ENCODE measurements at regions of chr3 and their contacts with region 1.

Region 1: DNA sequence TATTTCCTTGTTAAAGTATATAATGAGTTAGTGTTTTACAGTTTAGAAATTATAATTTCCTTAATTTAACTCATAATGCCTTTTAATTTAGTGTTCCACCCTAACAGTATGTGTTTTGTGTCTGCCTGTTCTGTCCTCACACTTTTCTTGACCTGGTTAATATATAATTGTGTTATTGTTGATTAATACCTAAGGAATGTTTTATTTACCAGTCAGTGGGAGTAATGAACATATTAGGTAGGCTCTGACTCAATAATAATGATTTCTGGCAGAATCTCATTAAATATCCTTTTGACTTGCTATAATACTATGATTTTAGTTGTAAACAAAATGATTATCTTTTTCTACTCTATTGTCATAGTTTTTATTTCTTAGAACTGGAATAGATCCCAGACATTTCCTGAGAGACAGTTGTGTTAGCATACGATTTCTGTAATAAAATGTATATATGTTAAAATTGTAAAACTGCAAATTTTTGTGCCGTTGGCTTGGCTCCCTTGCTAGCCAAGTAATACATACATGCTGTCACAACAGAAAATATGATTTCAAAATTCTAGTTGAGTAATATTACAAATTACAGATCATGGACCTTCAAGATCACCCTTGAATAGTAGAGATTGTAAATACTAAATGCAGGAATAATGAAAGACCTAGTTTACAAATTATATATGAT is 51.9 kb downstream of the RASA2 start:
- DNase-seq: no peak
- ATAC-seq: no peak
- H3K4me3 ChIP-seq: no peak overlapping the region
- H3K4me3 Mint-ChIP-seq: no peak overlapping the region
- H3K27ac ChIP-seq: no peak overlapping the region
- H3K27ac Mint-ChIP-seq: peak overlapping the region; percentile 55
- H3K4me1 ChIP-seq: peaks cover 6% of the 10 kb centered on the region
- H3K4me1 Mint-ChIP-seq: peaks cover 61% of the 10 kb centered on the region
- H3K27me3 ChIP-seq: no peaks in the 10 kb centered on the region
- H3K27me3 Mint-ChIP-seq: no peaks in the 10 kb centered on the region
- CTCF ChIP-seq: no peak

Region 2: DNA sequence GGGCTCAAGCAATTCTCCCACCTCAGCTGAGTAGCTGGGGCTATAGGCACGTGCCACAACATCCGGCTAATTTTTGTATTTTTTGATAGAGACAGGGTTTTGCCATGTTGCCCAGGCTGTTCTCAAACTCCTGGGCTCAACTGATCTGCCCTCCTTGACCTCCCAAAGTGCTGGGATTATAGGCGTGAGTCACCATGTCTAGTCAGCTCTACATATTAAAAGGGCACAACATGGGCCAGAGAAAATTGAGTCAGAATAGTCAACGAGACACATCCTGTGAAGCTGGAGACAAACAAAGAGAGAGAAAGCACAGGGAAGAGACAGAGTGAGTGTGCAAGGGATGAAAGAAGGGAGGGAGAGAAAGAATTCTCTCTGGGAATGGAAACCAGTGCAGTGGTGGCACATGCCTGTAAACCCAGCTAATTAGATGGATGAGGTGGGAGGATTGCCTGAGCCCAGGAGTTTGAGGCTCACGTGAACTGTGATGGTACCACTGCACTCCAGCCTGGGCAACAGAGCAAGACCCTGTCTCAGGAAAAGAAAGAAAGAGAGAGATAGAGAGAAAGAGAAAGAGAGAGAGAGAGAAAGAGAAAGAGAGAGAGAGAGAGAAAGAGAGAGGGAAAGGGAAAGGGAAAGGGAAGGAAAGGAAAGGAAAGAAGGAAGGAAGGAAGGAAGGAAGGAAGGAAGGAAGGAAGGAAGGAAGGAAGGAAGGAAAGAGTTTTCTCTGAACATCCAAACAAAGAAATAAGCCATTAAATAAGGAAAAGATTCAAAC is 704.3 kb before region 1 on chr3:
- CTCF ChIA-PET with region 1: no interaction called
- POLR2A ChIA-PET with region 1: no interaction called
- intact Hi-C with region 1: no loop called
- DNase-seq: no peak
- ATAC-seq: no peak
- H3K4me3 ChIP-seq: no peak overlapping the region
- H3K4me3 Mint-ChIP-seq: no peak overlapping the region
- H3K27ac ChIP-seq: no peak overlapping the region
- H3K27ac Mint-ChIP-seq: no peak overlapping the region
- H3K4me1 ChIP-seq: no peaks in the 10 kb centered on the region
- H3K4me1 Mint-ChIP-seq: peaks cover 9% of the 10 kb centered on the region
- H3K27me3 ChIP-seq: no peaks in the 10 kb centered on the region
- H3K27me3 Mint-ChIP-seq: peaks cover 6% of the 10 kb centered on the region
- CTCF ChIP-seq: no peak

Region 3: DNA sequence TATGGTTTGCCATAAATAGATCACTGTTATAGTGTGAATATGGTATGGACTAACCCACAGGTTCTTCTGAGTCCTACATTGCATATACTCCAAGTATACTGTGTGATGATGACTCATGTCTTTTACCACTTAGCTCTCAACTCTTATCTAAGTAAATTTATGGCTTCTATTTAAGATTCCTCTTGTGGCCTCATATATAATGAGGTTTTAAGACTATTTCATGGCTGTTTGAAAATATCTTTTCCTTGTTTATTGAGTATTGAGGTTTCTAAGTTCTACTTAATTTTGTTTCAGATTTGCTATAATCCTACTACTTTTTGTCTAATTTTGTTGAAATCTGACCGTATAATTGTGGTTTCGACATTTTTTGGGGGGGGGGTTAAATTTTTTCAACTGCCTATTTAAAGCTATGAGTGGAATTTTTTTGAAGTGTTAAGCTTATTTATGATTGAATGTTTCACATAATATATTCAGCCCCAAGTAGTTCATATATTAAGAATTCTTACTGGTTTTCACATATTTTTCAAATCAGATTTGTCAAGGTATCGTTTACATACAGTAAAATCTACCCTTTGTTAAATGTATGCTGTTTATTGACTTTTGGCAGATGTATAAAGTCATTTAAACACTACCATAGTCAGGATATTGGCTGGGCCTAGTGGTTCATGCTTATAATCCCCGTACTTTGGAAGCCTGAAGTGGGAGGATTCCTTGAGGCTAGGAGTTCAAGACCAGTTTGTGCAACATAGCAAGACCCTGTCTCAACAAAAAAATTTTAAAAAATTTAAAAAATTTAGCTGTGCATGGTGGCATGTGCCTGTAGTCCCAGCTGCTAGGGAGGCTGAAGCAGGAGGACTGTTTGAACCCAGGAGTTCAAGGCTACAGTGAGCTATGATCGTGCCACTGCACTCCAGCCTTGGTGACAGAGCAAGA is 585.4 kb before region 1 on chr3:
- CTCF ChIA-PET with region 1: no interaction called
- POLR2A ChIA-PET with region 1: no interaction called
- intact Hi-C with region 1: no loop called
- DNase-seq: no peak
- ATAC-seq: peak; percentile 42
- H3K4me3 ChIP-seq: no peak overlapping the region
- H3K4me3 Mint-ChIP-seq: no peak overlapping the region
- H3K27ac ChIP-seq: no peak overlapping the region
- H3K27ac Mint-ChIP-seq: no peak overlapping the region
- H3K4me1 ChIP-seq: peaks cover 7% of the 10 kb centered on the region
- H3K4me1 Mint-ChIP-seq: peaks cover 61% of the 10 kb centered on the region
- H3K27me3 ChIP-seq: no peaks in the 10 kb centered on the region
- H3K27me3 Mint-ChIP-seq: no peaks in the 10 kb centered on the region
- CTCF ChIP-seq: no peak

Region 4: GRCh38 chr3:141076797-141077571 is 461.7 kb before region 1 on chr3:
- CTCF ChIA-PET with region 1: no interaction called
- POLR2A ChIA-PET with region 1: no interaction called
- intact Hi-C with region 1: no loop called
- DNase-seq: peak in 2 of 9 experiments; percentile 26 to 31
- ATAC-seq: peak; percentile 52
- H3K4me3 ChIP-seq: no peak overlapping the region
- H3K4me3 Mint-ChIP-seq: peak overlapping the region; percentile 62
- H3K27ac ChIP-seq: no peak overlapping the region
- H3K27ac Mint-ChIP-seq: no peak overlapping the region
- H3K4me1 ChIP-seq: peaks cover 4% of the 10 kb centered on the region
- H3K4me1 Mint-ChIP-seq: peaks cover 10% of the 10 kb centered on the region
- H3K27me3 ChIP-seq: no peaks in the 10 kb centered on the region
- H3K27me3 Mint-ChIP-seq: peaks cover 2% of the 10 kb centered on the region
- CTCF ChIP-seq: no peak

Region 5: DNA sequence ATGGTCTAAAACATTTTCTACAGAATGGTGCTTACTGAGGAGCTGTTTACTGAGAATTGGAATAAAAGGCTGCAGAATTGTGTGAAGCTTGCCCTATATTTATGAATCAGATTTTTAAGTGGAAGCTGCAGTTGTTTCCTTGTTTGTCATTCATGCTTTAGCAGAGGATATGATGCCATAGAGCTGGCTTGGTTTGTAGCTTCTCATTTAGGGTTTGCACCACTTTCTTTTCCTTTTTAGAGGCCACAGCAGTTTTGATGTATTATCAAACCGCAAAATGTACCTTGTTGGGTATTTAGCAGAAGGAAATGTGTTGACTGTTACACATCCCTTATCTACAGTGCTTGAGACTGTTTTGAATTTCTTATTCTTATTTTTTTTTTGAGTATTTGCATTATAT is 14.4 kb after region 1 on chr3:
- CTCF ChIA-PET with region 1: interaction called, 3 read pairs
- POLR2A ChIA-PET with region 1: interaction called, 5 read pairs
- intact Hi-C with region 1: loop called (anchors 1 to 2 kb)
- DNase-seq: peak in 4 of 9 experiments; percentile 21 to 80 (median 48)
- ATAC-seq: peak; percentile 89
- H3K4me3 ChIP-seq: no peak overlapping the region
- H3K4me3 Mint-ChIP-seq: peak overlapping the region; percentile 65
- H3K27ac ChIP-seq: peak overlapping the region; percentile 15 to 45
- H3K27ac Mint-ChIP-seq: peak overlapping the region; percentile 83
- H3K4me1 ChIP-seq: peaks cover 68% of the 10 kb centered on the region
- H3K4me1 Mint-ChIP-seq: peaks cover 64% of the 10 kb centered on the region
- H3K27me3 ChIP-seq: no peaks in the 10 kb centered on the region
- H3K27me3 Mint-ChIP-seq: no peaks in the 10 kb centered on the region
- CTCF ChIP-seq: no peak

Measured in CD8-positive, alpha-beta T cell (primary cell).